ENCODE measurements at regions of chr12 and their contacts with region 1.

Region 1: GRCh38 chr12:93569656-93570551 is 2.6 kb upstream of the SOCS2 start:
- DNase-seq: peak; percentile 86
- H3K4me3 Mint-ChIP-seq: peak overlapping the region; percentile 83
- H3K27ac Mint-ChIP-seq: peak overlapping the region; percentile 84
- H3K4me1 Mint-ChIP-seq: peaks cover 24% of the 10 kb centered on the region
- H3K27me3 Mint-ChIP-seq: peaks cover 14% of the 10 kb centered on the region

Region 2: GRCh38 chr12:93387780-93388179 is 182.1 kb before region 1 on chr12:
- CTCF ChIA-PET with region 1: no interaction called
- POLR2A ChIA-PET with region 1: no interaction called
- intact Hi-C with region 1: loop called (anchors 5 kb)
- DNase-seq: peak; percentile 83
- H3K4me3 Mint-ChIP-seq: no peak overlapping the region
- H3K27ac Mint-ChIP-seq: peak overlapping the region; percentile 67
- H3K4me1 Mint-ChIP-seq: peaks cover 62% of the 10 kb centered on the region
- H3K27me3 Mint-ChIP-seq: no peaks in the 10 kb centered on the region

Region 3: GRCh38 chr12:93502802-93503623 is 66.9 kb before region 1 on chr12:
- CTCF ChIA-PET with region 1: interaction called, 22 read pairs
- POLR2A ChIA-PET with region 1: no interaction called
- intact Hi-C with region 1: loop called (anchors 2 kb)
- DNase-seq: peak; percentile 64
- H3K4me3 Mint-ChIP-seq: no peak overlapping the region
- H3K27ac Mint-ChIP-seq: no peak overlapping the region
- H3K4me1 Mint-ChIP-seq: peaks cover 10% of the 10 kb centered on the region
- H3K27me3 Mint-ChIP-seq: no peaks in the 10 kb centered on the region

Region 4: DNA sequence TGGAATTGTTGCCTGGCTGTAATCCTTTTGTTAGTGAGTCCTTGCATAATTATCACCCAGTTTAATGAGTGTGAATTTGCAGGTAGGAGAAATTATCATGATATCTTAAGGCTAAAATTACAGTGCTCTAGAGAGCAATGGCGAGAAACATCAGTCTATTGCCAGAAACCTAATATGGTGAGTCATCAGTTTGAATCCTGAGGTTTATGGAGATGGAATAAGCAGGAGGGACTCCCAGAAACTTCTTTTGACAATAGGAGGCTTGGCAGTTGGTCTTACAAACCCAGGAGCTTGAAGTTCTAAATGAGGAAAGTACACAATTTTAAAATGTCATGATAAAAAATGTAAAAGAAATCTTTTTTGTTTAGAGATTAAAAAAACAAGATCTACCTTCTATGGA is 75.8 kb after region 1 on chr12:
- CTCF ChIA-PET with region 1: no interaction called
- POLR2A ChIA-PET with region 1: no interaction called
- intact Hi-C with region 1: no loop called
- DNase-seq: no peak
- H3K4me3 Mint-ChIP-seq: no peak overlapping the region
- H3K27ac Mint-ChIP-seq: no peak overlapping the region
- H3K4me1 Mint-ChIP-seq: no peaks in the 10 kb centered on the region
- H3K27me3 Mint-ChIP-seq: peaks cover 5% of the 10 kb centered on the region

Region 5: GRCh38 chr12:93677195-93678064 is 107.5 kb after region 1 on chr12 and contains the start of gene CRADD:
- CTCF ChIA-PET with region 1: interaction called, 6 read pairs
- POLR2A ChIA-PET with region 1: no interaction called
- intact Hi-C with region 1: loop called (anchors 1 kb)
- DNase-seq: peak; percentile 90
- H3K4me3 Mint-ChIP-seq: peak within 1 kb of the TSS; percentile 93
- H3K27ac Mint-ChIP-seq: peak within 1 kb of the TSS; percentile 100
- H3K4me1 Mint-ChIP-seq: peaks cover 41% of the 10 kb centered on the region
- H3K27me3 Mint-ChIP-seq: peaks cover 11% of the 10 kb centered on the region
- total RNA-seq, gene CRADD: 8.9 to 10.4 TPM

Region 6: GRCh38 chr12:93766796-93767523 is 197.1 kb after region 1 on chr12:
- CTCF ChIA-PET with region 1: interaction called, 16 read pairs
- POLR2A ChIA-PET with region 1: no interaction called
- intact Hi-C with region 1: loop called (anchors 1 kb)
- DNase-seq: peak; percentile 48
- H3K4me3 Mint-ChIP-seq: no peak overlapping the region
- H3K27ac Mint-ChIP-seq: peak overlapping the region; percentile 44
- H3K4me1 Mint-ChIP-seq: peaks cover 30% of the 10 kb centered on the region
- H3K27me3 Mint-ChIP-seq: no peaks in the 10 kb centered on the region

Region 7: GRCh38 chr12:93979189-93979588 is 409.3 kb after region 1 on chr12:
- CTCF ChIA-PET with region 1: interaction called, 4 read pairs
- POLR2A ChIA-PET with region 1: no interaction called
- intact Hi-C with region 1: loop called (anchors 1 kb)
- DNase-seq: peak; percentile 26
- H3K4me3 Mint-ChIP-seq: no peak overlapping the region
- H3K27ac Mint-ChIP-seq: no peak overlapping the region
- H3K4me1 Mint-ChIP-seq: peaks cover 6% of the 10 kb centered on the region
- H3K27me3 Mint-ChIP-seq: no peaks in the 10 kb centered on the region

Region 8: GRCh38 chr12:94149119-94149780 is 579.3 kb after region 1 on chr12:
- CTCF ChIA-PET with region 1: no interaction called
- POLR2A ChIA-PET with region 1: no interaction called
- intact Hi-C with region 1: loop called (anchors 1 kb)
- DNase-seq: peak; percentile 54
- H3K4me3 Mint-ChIP-seq: peak overlapping the region; percentile 82
- H3K27ac Mint-ChIP-seq: no peak overlapping the region
- H3K4me1 Mint-ChIP-seq: peaks cover 19% of the 10 kb centered on the region
- H3K27me3 Mint-ChIP-seq: peaks cover 11% of the 10 kb centered on the region